Activated CD4-positive, alpha-beta T cell treated with anti-CD3 and anti-CD28 coated beads, Interleukin-2, amount 10 ng/mL, durations not matched to agents 24 days and 14 days (primary cell): ENCODE measurements at regions of chr7 and their contacts with region 1.

Region 1: DNA sequence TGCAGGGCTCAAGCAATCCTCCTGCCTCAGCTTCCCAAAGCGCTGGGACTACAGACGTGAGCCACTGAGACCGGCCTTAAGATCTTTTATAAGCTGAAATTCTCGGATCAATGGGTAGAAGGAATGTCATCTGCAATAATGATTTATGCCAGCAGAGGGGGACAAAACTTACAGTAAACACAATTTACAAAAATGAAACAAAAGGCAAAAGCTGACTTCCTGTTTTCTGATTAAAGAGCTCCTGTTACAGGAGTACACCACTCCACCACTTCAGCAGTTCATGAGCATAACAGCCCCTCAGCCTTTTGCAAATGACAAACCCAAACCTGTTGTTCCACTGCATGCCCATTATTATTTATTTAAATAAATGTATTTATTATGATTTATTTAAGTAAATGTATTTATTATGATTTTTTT is 88.5 kb upstream of the ATP6V0A4 start:
- DNase-seq: peak; percentile 90
- H3K4me3 Mint-ChIP-seq: no peak overlapping the region
- H3K27ac Mint-ChIP-seq: peak overlapping the region; percentile 43
- H3K4me1 Mint-ChIP-seq: peaks cover 22% of the 10 kb centered on the region
- H3K27me3 Mint-ChIP-seq: peaks cover 8% of the 10 kb centered on the region

Region 2: DNA sequence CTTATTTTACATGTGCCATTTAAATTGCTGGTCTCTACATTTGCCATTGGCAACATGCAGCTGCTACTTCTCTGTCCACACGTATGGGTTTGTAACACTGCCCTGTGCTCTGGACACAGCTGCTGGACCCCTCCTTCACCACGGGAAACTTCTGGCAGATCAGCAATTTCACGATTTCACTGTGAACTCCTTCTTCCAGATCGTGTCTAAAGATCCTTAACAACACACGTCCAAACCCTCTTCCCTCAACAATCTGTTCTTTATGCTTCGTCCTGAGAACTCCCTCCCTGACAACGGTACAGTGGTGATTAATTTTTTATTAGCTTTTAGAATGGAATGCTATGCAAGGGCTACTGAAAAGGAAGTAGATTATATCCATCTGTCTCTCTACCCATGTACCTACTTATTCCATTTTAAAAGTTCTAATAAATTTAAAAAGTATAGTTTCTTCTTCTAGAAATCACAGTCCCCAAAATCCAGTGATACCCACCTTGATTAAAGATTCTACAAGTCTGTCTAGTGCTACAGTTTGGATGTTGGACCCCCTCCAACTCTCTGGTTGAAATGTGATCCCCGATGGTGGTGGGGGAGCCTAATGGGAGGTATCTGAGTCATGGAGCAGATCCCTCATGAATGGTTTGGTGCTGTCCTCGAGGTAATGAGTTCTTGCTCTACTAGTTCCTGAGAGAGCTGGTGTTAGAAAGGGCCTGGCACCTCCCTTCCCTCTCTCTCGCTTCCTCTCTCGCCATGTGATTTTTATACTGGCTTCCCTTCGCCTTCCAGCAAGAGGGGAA is 13.7 kb after region 1 on chr7:
- intact Hi-C with region 1: loop called (anchors 1 kb)
- DNase-seq: no peak
- H3K4me3 Mint-ChIP-seq: no peak overlapping the region
- H3K27ac Mint-ChIP-seq: no peak overlapping the region
- H3K4me1 Mint-ChIP-seq: peaks cover 52% of the 10 kb centered on the region
- H3K27me3 Mint-ChIP-seq: peaks cover 34% of the 10 kb centered on the region

Region 3: GRCh38 chr7:138981332-138982203 is 95.1 kb after region 1 on chr7 and contains the start of gene KIAA1549:
- intact Hi-C with region 1: loop called (anchors 1 kb)
- DNase-seq: peak; percentile 88
- H3K4me3 Mint-ChIP-seq: peak within 1 kb of the TSS; percentile 85
- H3K27ac Mint-ChIP-seq: peak within 1 kb of the TSS; percentile 46
- H3K4me1 Mint-ChIP-seq: peaks cover 11% of the 10 kb centered on the region
- H3K27me3 Mint-ChIP-seq: peaks cover 61% of the 10 kb centered on the region
- total RNA-seq, gene KIAA1549: 0.77 and 0.95 TPM in 2 replicates

Region 4: DNA sequence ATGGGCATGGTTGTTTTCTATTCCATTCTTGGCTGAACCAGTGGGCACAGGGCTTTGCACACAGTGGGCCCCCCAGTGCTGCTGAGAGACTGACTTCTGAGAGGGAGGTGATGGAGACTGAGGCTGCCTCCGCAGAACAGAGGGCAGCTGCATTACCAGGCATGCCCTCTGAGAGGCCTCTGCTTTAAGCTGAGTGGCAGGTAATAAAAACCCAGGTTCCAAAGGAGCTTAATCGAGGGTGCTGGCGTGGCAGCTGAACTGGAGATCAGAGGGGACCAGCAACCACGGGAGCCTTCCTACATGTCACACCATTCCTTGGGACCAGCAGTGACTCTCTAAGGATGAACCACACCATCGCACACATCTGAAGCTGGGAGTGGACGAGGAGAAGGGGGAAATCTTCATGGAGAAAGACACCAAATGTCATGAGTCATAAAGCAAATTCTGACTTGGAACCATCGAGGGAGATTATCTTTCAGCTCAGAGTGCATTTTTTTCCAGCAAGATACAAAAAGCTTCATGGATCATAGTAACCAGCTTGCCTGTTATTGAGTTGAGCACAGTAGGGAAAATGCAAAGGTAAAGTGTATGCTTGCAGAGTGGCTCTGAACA is 866.7 kb after region 1 on chr7:
- intact Hi-C with region 1: loop called (anchors 10 kb)
- DNase-seq: no peak
- H3K4me3 Mint-ChIP-seq: no peak overlapping the region
- H3K27ac Mint-ChIP-seq: no peak overlapping the region
- H3K4me1 Mint-ChIP-seq: peaks cover 27% of the 10 kb centered on the region
- H3K27me3 Mint-ChIP-seq: no peaks in the 10 kb centered on the region